IMR-90 (cell line): ENCODE measurements at regions of chr3 and their contacts with region 1.

Region 1: DNA sequence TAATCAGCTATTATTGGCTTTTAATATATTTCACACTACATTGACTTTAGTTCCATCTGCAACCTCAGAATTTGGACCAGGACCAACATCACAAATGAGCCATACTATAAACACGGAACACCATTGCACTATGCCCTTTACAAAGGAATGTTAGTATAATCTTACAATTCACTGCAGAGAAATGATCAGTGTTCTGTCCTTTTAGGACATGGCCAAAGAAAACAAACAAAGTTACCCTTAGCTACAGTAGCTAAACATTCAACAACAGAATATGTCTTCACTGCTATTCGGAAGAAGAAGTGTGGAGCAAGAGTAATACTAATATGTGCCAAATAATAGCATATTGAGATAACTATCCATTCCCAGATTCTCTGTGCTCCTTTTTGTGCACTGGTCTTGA is 90.4 kb downstream of the NAALADL2 start:
- DNase-seq: peak; percentile 97
- ATAC-seq: peak; percentile 72
- H3K4me3 ChIP-seq: no peak overlapping the region
- H3K27ac ChIP-seq: peak overlapping the region; percentile 86
- H3K4me1 ChIP-seq: peaks cover 11% of the 10 kb centered on the region
- H3K27me3 ChIP-seq: no peaks in the 10 kb centered on the region
- CTCF ChIP-seq: no peak
- POLR2A ChIP-seq: no peak
- RAD21 ChIP-seq: peak; percentile 10; the same call in 1 of the 2 replicates

Region 2: GRCh38 chr3:174397848-174398247 is 551.7 kb before region 1 on chr3:
- CTCF ChIA-PET with region 1: no interaction called
- POLR2A ChIA-PET with region 1: no interaction called
- dilution Hi-C with region 1: no loop called
- in situ Hi-C with region 1: no loop called
- intact Hi-C with region 1: no loop called
- DNase-seq: peak; percentile 50
- ATAC-seq: 0 out of 2 replicates have a peak, but pooled peaks have one; percentile 24
- H3K4me3 ChIP-seq: no peak overlapping the region
- H3K27ac ChIP-seq: no peak overlapping the region
- H3K4me1 ChIP-seq: no peaks in the 10 kb centered on the region
- H3K27me3 ChIP-seq: no peaks in the 10 kb centered on the region
- CTCF ChIP-seq: peak; percentile 60
- POLR2A ChIP-seq: no peak
- RAD21 ChIP-seq: peak; percentile 72

Region 3: GRCh38 chr3:175381685-175382084 is 432.2 kb after region 1 on chr3:
- CTCF ChIA-PET with region 1: no interaction called
- POLR2A ChIA-PET with region 1: interaction called, 15 read pairs
- dilution Hi-C with region 1: no loop called
- in situ Hi-C with region 1: no loop called
- intact Hi-C with region 1: no loop called
- DNase-seq: no peak
- ATAC-seq: no peak
- H3K4me3 ChIP-seq: no peak overlapping the region
- H3K27ac ChIP-seq: no peak overlapping the region
- H3K4me1 ChIP-seq: no peaks in the 10 kb centered on the region
- H3K27me3 ChIP-seq: no peaks in the 10 kb centered on the region
- CTCF ChIP-seq: no peak
- POLR2A ChIP-seq: no peak
- RAD21 ChIP-seq: no peak

Region 4: DNA sequence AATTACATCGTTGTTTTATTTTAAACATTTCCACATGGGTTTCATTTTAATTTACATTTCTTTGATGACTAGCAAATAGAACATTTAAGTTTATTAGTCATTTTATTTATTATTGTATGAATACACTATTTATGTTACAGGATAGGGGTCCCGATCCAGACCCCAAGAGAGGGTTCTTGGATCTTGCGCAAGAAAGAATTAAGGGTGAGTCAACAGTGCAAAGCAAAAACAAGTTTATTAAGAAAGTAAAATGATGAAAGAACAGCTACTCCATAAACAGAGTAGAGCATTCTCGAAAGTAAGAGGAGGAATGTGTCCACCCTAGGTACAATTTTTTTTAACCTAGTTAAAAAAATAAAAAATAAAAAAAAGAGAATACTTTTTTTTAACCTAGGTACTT is 449.2 kb after region 1 on chr3:
- CTCF ChIA-PET with region 1: no interaction called
- POLR2A ChIA-PET with region 1: no interaction called
- dilution Hi-C with region 1: no loop called
- in situ Hi-C with region 1: no loop called
- intact Hi-C with region 1: loop called (anchors 5 kb)
- DNase-seq: peak; percentile 88
- ATAC-seq: peak; percentile 82
- H3K4me3 ChIP-seq: no peak overlapping the region
- H3K27ac ChIP-seq: no peak overlapping the region
- H3K4me1 ChIP-seq: peaks cover 12% of the 10 kb centered on the region
- H3K27me3 ChIP-seq: no peaks in the 10 kb centered on the region
- CTCF ChIP-seq: no peak
- POLR2A ChIP-seq: no peak
- RAD21 ChIP-seq: no peak